GM10248 (cell line): ENCODE measurements at regions of chr1 and their contacts with region 1.

Region 1: GRCh38 chr1:181044449-181044966 is 10.7 kb downstream of the MR1 start:
- DNase-seq: peak; percentile 75
- CTCF ChIP-seq: no peak

Region 2: GRCh38 chr1:180849036-180849775 is 195.3 kb before region 1 on chr1:
- CTCF ChIA-PET with region 1: no interaction called
- POLR2A ChIA-PET with region 1: no interaction called
- DNase-seq: peak; percentile 47
- CTCF ChIP-seq: no peak

Region 3: GRCh38 chr1:181057079-181057478 is 12.6 kb after region 1 on chr1:
- CTCF ChIA-PET with region 1: interaction called, 69 read pairs
- POLR2A ChIA-PET with region 1: interaction called, 3 read pairs
- DNase-seq: no peak
- CTCF ChIP-seq: no peak